ENCODE measurements at regions of chr10 and their contacts with region 1.

Region 1: DNA sequence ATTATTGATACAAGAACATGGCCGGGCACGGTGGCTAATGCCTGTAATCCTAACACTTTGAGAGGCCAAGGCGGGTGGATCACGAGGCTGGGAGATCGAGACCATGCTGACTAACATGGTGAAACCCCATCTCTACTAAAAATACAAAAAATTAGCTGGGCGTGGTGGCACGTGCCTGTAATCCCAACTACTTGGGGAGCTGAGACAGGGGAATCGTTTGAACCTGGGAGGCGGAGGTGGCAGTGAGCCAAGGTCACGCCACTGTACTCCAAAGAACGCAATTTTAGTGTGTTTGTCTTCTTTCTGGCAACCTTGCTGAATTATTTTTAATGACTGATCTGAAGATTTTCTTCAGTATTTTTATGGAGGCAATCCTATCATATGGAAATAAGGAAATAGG is 46.2 kb downstream of the IDE start:
- DNase-seq: no peak
- ATAC-seq: no peak
- H3K4me3 Mint-ChIP-seq: no peak overlapping the region
- H3K27ac Mint-ChIP-seq: no peak overlapping the region
- H3K4me1 Mint-ChIP-seq: no peaks in the 10 kb centered on the region
- H3K27me3 Mint-ChIP-seq: no peaks in the 10 kb centered on the region

Region 2: DNA sequence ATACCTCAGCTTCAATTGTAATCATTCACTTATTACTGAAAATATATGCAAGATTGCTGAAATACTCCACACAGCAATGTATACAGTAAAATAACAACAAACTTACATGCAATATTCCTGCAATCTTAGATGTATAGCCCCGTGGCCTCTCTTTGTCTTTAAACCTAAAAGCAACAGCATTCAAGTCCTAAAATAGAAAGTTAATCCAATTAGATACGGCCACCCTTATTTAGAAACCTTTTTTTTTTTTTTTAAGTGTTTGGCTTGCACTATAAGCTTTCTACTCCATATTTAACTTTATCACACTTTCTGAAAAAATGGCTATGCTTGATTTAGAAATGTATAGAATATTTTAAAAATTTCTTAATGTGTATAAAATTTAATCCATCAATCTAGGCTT is 21.4 kb before region 1 on chr10:
- CTCF ChIA-PET with region 1: no interaction called
- POLR2A ChIA-PET with region 1: no interaction called
- intact Hi-C with region 1: no loop called
- DNase-seq: no peak
- ATAC-seq: no peak
- H3K4me3 Mint-ChIP-seq: no peak overlapping the region
- H3K27ac Mint-ChIP-seq: no peak overlapping the region
- H3K4me1 Mint-ChIP-seq: no peaks in the 10 kb centered on the region
- H3K27me3 Mint-ChIP-seq: no peaks in the 10 kb centered on the region

Region 3: GRCh38 chr10:92517034-92517655 is 10.6 kb before region 1 on chr10:
- CTCF ChIA-PET with region 1: interaction called, 11 read pairs
- POLR2A ChIA-PET with region 1: no interaction called
- intact Hi-C with region 1: no loop called
- DNase-seq: peak; percentile 77
- ATAC-seq: peak; percentile 92
- H3K4me3 Mint-ChIP-seq: no peak overlapping the region
- H3K27ac Mint-ChIP-seq: no peak overlapping the region
- H3K4me1 Mint-ChIP-seq: peaks cover 6% of the 10 kb centered on the region
- H3K27me3 Mint-ChIP-seq: no peaks in the 10 kb centered on the region

Measured in activated CD4-positive, alpha-beta T cell treated with anti-CD3 and anti-CD28 coated beads for 36 hours (primary cell).